ENCODE measurements at regions of chr4 and their contacts with region 1.

Region 1: DNA sequence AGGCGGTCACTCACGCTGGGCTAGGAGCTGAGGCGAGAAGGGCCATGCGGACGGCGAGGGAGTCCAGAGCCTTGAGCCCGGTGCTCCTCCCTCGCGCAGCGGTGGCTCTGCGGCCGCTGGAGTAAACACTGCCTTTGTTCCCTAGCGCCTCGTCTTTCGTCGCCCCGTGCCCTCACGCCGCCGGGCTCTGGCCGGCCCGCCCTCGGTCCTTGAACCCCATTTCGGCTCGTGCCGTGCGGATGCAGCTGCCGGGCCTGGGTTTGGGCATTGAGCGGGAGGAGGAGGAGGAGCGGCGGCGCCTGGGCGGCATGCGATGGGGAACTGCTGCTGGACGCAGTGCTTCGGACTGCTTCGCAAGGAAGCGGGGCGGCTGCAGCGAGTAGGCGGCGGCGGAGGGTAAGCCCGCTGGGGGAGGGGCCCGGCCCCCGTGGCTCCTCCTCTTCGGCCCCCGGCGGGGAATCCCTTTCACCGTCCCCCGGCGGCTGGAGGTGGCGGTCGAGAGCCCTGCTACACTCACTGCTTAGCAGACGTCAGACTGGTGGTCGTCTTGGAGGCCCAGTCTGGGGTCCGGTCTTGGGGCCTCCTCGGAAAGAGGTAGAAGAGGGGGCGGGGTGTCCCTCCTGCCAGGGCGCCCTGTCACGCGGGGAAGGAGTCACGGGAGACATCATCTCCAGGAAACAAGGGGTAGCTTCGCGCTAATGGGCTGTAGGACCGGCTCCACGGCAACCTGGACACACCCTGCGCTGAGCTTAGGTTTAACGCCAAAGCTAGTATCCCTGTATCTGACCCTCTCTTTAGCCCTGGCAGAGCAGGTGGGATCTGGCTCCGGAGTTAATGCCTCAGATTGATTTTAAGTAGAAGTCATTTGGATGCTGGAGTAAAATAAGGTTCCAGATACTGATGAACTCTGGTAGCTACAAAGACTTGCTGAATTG is at the start of gene AP1AR:
- DNase-seq: peak; percentile 91
- ATAC-seq: peak; percentile 73
- H3K4me3 Mint-ChIP-seq: peak within 1 kb of the TSS; percentile 100
- H3K27ac Mint-ChIP-seq: peak within 1 kb of the TSS; percentile 99
- H3K4me1 Mint-ChIP-seq: peaks cover 30% of the 10 kb centered on the region
- H3K27me3 Mint-ChIP-seq: peaks cover 1% of the 10 kb centered on the region
- CTCF ChIP-seq: no peak
- total RNA-seq, gene AP1AR: 20.1 and 24.3 TPM in 2 replicates

Region 2: DNA sequence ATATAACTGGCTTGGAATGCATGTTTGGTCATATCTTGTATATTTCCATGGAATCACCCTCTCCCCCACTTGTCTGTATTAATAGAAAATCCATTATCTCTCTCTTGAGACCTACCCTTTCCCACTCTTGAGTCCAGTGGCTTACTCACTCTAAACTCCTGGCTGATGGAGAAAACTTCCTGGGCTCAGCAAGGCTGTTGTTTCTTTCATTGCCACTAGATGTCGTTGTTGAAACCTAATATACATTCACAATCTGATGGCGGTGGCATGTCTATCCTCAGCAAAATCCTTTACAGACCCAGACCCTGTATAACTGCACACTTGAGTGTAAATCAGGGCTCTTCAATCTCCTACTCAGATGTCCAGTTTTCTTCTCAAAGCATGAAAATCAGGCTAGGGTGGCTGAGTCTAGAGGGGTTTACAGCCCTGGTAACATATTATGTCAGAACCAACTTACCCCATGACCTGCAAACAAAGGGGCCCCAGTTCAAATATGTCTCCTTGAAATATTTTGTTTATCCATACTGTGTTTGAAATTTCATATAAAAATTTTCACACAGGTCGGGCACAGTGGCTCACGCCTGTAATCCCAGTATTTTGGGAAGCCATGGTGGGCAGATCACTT is 156.8 kb before region 1 on chr4:
- CTCF ChIA-PET with region 1: no interaction called
- POLR2A ChIA-PET with region 1: no interaction called
- intact Hi-C with region 1: loop called (anchors 1 kb)
- DNase-seq: no peak
- ATAC-seq: peak; percentile 64
- H3K4me3 Mint-ChIP-seq: no peak overlapping the region
- H3K27ac Mint-ChIP-seq: no peak overlapping the region
- H3K4me1 Mint-ChIP-seq: no peaks in the 10 kb centered on the region
- H3K27me3 Mint-ChIP-seq: peaks cover 2% of the 10 kb centered on the region
- CTCF ChIP-seq: no peak

Region 3: GRCh38 chr4:112183252-112183651 is 48.8 kb before region 1 on chr4:
- CTCF ChIA-PET with region 1: no interaction called
- POLR2A ChIA-PET with region 1: no interaction called
- intact Hi-C with region 1: no loop called
- DNase-seq: no peak
- ATAC-seq: no peak
- H3K4me3 Mint-ChIP-seq: no peak overlapping the region
- H3K27ac Mint-ChIP-seq: no peak overlapping the region
- H3K4me1 Mint-ChIP-seq: no peaks in the 10 kb centered on the region
- H3K27me3 Mint-ChIP-seq: no peaks in the 10 kb centered on the region
- CTCF ChIP-seq: no peak

Region 4: GRCh38 chr4:112199040-112199439 is 33.0 kb before region 1 on chr4:
- CTCF ChIA-PET with region 1: no interaction called
- POLR2A ChIA-PET with region 1: no interaction called
- intact Hi-C with region 1: no loop called
- DNase-seq: no peak
- ATAC-seq: no peak
- H3K4me3 Mint-ChIP-seq: no peak overlapping the region
- H3K27ac Mint-ChIP-seq: no peak overlapping the region
- H3K4me1 Mint-ChIP-seq: no peaks in the 10 kb centered on the region
- H3K27me3 Mint-ChIP-seq: no peaks in the 10 kb centered on the region
- CTCF ChIP-seq: no peak

Region 5: GRCh38 chr4:112214390-112215264 is 17.4 kb before region 1 on chr4:
- CTCF ChIA-PET with region 1: interaction called, 14 read pairs
- POLR2A ChIA-PET with region 1: interaction called, 6 read pairs
- intact Hi-C with region 1: loop called (anchors 1 kb)
- DNase-seq: no peak
- ATAC-seq: no peak
- H3K4me3 Mint-ChIP-seq: no peak overlapping the region
- H3K27ac Mint-ChIP-seq: no peak overlapping the region
- H3K4me1 Mint-ChIP-seq: no peaks in the 10 kb centered on the region
- H3K27me3 Mint-ChIP-seq: no peaks in the 10 kb centered on the region
- CTCF ChIP-seq: peak; percentile 17

Region 6: DNA sequence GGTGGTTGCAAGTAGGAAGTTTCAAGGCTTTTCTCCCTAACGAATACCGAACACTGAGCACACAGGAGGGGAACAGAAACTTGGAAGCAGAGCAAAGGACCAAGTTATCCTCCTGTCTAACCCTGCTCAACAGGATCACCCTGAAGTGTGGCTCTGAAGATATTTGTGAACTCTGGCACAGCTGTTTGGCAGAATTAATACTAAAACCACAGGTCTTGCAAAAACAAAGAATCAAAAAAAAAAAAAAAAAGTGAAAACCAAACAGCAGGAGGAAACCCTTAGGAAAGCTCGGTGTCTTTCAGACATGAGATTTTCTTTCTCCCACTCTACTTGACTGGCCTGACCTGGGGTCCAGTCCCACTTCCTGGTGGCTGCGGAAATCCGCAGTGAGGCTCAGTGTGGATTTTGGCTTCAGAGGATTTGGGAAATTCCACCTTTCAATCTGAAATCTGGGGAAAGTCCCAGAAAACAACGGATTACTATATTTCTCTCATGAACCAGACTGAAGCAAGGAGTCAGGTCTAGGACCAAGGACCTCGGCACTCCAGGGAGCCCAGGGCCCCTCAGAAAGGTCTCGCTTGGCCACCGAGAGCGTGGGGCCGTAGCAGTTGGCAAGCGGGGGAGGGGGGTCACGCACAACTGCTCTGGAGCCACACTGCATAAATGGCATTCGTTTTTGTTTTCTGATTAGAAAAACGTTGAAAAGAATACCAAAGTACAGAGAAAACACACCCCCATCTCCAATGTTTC is 52.8 kb after region 1 on chr4:
- CTCF ChIA-PET with region 1: interaction called, 5 read pairs
- POLR2A ChIA-PET with region 1: interaction called, 24 read pairs
- intact Hi-C with region 1: loop called (anchors 1 kb)
- DNase-seq: no peak
- ATAC-seq: peak; percentile 13
- H3K4me3 Mint-ChIP-seq: peak overlapping the region; percentile 98
- H3K27ac Mint-ChIP-seq: peak overlapping the region; percentile 98
- H3K4me1 Mint-ChIP-seq: peaks cover 88% of the 10 kb centered on the region
- H3K27me3 Mint-ChIP-seq: no peaks in the 10 kb centered on the region
- CTCF ChIP-seq: no peak

Region 7: GRCh38 chr4:112515304-112516067 is 283.4 kb after region 1 on chr4:
- CTCF ChIA-PET with region 1: no interaction called
- POLR2A ChIA-PET with region 1: no interaction called
- intact Hi-C with region 1: loop called (anchors 2 kb)
- DNase-seq: no peak
- ATAC-seq: peak; percentile 46
- H3K4me3 Mint-ChIP-seq: peak overlapping the region; percentile 92
- H3K27ac Mint-ChIP-seq: peak overlapping the region; percentile 62
- H3K4me1 Mint-ChIP-seq: peaks cover 49% of the 10 kb centered on the region
- H3K27me3 Mint-ChIP-seq: peaks cover 79% of the 10 kb centered on the region
- CTCF ChIP-seq: no peak